ENCODE measurements at regions of chr6 and their contacts with region 1.

Region 1: DNA sequence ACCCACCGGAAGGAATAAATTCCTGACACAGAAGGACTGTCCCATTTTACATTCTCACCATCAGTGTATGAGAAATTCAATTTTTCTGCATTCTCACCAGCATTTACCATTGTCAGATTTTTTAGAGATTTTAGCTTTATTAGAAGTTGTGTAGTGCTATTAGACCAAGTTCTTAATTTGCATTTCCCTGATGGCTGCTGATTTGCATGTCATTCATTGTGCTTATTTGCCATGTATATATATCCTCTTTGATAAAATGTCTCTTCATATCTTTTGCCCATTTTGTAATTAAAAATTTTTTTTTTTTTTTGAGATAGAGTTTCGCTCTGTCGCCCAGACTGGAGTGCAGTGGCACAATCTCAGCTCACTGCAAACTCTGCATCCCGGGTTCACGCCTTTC is 9.8 kb upstream of the HLA-DRB5 start:
- DNase-seq: no peak
- ATAC-seq: no peak
- H3K4me3 Mint-ChIP-seq: no peak overlapping the region
- H3K27ac Mint-ChIP-seq: no peak overlapping the region
- H3K4me1 Mint-ChIP-seq: no peaks in the 10 kb centered on the region
- H3K27me3 Mint-ChIP-seq: no peaks in the 10 kb centered on the region

Region 2: GRCh38 chr6:32483968-32484636 is 55.7 kb before region 1 on chr6:
- CTCF ChIA-PET with region 1: no interaction called
- POLR2A ChIA-PET with region 1: no interaction called
- intact Hi-C with region 1: loop called in 1 of 2 experiments (anchors 2 kb)
- DNase-seq: no peak
- ATAC-seq: no peak
- H3K4me3 Mint-ChIP-seq: no peak overlapping the region
- H3K27ac Mint-ChIP-seq: no peak overlapping the region
- H3K4me1 Mint-ChIP-seq: no peaks in the 10 kb centered on the region
- H3K27me3 Mint-ChIP-seq: peaks cover 6% of the 10 kb centered on the region

Region 3: GRCh38 chr6:32491700-32492099 is 48.1 kb before region 1 on chr6:
- CTCF ChIA-PET with region 1: no interaction called
- POLR2A ChIA-PET with region 1: no interaction called
- intact Hi-C with region 1: loop called in 1 of 2 experiments (anchors 1 kb)
- DNase-seq: no peak
- ATAC-seq: no peak
- H3K4me3 Mint-ChIP-seq: no peak overlapping the region
- H3K27ac Mint-ChIP-seq: no peak overlapping the region
- H3K4me1 Mint-ChIP-seq: peaks cover 3% of the 10 kb centered on the region
- H3K27me3 Mint-ChIP-seq: peaks cover 16% of the 10 kb centered on the region

Measured in activated CD4-positive, alpha-beta T cell treated with anti-CD3 and anti-CD28 coated beads for 36 hours (primary cell).